PC-3 (cell line): ENCODE measurements at regions of chr9 and their contacts with region 1.

Region 1: GRCh38 chr9:130847327-130848217 is 12.5 kb downstream of the ABL1 start:
- DNase-seq: peak; percentile 91
- ATAC-seq: peak; percentile 70
- H3K4me3 ChIP-seq: peak overlapping the region; percentile 57; the same call in 1 of the 2 replicates
- H3K27ac ChIP-seq: peak overlapping the region; percentile 92
- H3K4me1 ChIP-seq: peaks cover 39% of the 10 kb centered on the region
- H3K27me3 ChIP-seq: no peaks in the 10 kb centered on the region
- CTCF ChIP-seq: 0 out of 2 replicates have a peak, but pooled peaks have one; percentile 24

Region 2: DNA sequence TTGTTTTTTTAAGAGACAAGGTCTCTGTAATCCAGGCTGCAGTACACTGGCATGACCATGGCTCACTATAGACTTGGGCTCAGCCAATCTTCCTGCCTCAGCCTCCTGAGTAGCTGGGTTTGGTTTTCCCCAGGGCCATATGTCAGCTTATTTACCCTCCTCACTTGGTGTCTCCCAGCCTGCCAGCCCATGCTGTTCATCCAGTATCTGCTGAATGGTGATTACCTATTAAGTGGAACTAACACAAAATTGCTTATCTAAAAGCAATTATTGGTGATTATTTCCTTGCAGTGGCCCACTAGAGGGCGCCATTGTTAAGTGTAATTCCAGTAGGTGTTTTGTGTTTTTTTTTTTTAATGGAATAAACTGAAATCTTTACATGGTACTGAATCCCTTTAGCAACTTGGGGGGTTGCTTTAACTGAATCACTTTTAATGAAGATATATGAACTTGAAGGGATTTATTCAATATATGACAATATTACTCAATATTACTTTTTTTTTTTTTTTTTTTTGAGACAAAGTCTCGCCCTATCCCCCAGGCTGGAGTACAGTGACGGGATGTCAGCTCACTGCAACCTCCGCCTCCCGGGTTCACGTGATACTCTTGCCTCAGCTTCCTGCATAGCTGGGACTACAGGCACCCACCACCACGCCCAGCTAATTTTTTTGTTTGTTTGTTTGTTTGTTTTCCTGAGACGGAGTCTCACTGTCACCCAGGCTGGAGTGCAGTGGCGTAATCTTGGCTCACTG is 140.2 kb before region 1 on chr9:
- CTCF ChIA-PET with region 1: no interaction called
- POLR2A ChIA-PET with region 1: no interaction called
- intact Hi-C with region 1: loop called (anchors 5 kb)
- DNase-seq: peak; percentile 63
- ATAC-seq: peak; percentile 70
- H3K4me3 ChIP-seq: no peak overlapping the region
- H3K27ac ChIP-seq: no peak overlapping the region
- H3K4me1 ChIP-seq: no peaks in the 10 kb centered on the region
- H3K27me3 ChIP-seq: no peaks in the 10 kb centered on the region
- CTCF ChIP-seq: peak; percentile 87

Region 3: DNA sequence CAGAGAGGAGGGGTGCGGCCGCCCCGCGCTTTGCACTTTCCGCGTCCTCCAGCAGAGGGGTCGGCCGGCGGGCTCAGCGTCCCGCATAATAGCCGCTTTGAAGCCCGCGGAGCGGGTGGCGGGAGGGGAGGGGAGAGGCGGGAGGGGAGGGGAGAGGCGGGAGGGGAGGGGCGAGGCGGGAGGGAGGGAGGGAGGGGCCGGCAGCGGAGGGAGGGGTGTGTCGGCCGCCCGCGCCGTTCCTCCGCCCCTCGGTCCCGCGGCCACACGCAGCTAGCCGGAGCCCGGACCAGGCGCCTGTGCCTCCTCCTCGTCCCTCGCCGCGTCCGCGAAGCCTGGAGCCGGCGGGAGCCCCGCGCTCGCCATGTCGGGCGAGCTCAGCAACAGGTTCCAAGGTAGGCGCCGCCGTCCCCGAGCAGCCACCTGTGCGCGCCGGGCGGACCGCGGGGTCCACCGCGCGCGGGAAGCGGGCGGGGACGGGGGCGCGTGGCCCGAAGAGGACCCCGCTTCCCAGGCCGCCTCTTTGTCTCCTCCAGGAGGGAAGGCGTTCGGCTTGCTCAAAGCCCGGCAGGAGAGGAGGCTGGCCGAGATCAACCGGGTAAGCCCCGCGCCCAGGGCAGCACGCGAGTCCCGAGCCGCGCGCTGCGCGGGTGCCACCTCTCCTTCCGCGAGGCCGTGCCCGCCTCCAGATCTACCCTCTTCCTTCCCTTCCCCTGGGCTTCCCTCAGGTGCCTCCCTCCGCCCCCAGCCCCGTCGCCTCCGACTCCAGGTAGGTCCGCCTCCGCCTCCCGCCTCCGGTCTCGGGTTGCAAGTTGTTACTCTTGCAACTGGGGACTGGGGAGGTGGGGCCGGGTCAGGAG is 248.9 kb after region 1 on chr9 and contains the start of gene AIF1L:
- CTCF ChIA-PET with region 1: no interaction called
- POLR2A ChIA-PET with region 1: no interaction called
- intact Hi-C with region 1: no loop called
- DNase-seq: peak; percentile 62
- ATAC-seq: peak; percentile 58
- H3K4me3 ChIP-seq: peak within 1 kb of the TSS; percentile 73
- H3K27ac ChIP-seq: no peak within 1 kb of the TSS
- H3K4me1 ChIP-seq: 0 out of 2 replicates have a peak, but pooled peaks cover 6% of the 10 kb centered on the region
- H3K27me3 ChIP-seq: no peaks in the 10 kb centered on the region
- CTCF ChIP-seq: no peak
- total RNA-seq, gene AIF1L: 23.7 and 27.0 TPM in 2 replicates